ENCODE measurements at regions of chr11 and their contacts with region 1.

Region 1: DNA sequence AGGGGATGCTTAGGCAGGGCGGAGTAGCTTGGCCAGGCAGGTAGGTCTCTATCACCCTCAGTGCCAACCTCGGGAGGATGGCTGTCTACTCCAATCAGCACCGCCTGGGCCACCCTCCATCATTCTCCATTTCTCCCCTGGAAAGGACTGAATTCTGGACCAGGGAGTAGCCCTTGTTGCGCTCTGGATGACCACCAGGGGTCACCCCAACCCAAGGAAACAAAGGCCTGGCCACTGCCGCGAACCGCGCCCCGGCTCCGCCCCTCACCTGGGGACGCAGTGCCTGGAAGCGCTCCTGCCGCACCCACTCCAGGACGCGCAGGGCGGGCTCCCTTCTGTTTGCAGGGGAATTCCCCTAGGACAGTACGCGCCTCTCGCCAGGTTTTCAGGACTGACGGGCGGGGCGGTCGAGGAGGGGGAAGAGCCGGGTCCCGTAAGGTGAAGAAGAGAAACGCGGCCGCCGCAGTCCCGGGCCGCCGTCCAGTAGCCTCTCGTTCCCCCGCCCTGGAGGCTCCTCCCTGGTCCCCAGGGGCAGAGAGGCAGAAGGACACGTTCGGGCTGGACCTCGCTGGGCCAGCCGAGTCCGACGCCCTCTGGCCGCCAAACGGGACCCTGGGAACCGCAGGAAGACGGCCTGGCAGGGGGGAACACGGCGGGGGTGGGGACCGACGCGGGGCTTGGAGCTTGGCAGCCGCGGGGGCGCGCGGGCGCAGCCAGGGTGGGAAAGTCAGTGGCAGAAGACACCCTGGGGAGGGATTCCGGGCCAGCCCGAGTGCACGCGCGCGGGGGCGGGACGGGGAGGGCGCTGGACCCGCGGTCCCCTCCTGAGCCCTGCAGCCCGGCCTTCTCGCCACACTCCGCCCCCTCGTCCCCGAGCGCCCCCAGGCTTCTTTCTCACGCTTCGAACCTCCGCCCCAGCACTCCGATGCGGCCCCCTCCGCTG is 7.1 kb downstream of the SCN4B start:
- DNase-seq: peak; percentile 73 to 91 (median 88)
- ATAC-seq: peak; percentile 97
- H3K4me3 ChIP-seq: peak overlapping the region; percentile 57 to 63
- H3K4me3 Mint-ChIP-seq: peak overlapping the region; percentile 86
- H3K27ac ChIP-seq: no peak overlapping the region
- H3K27ac Mint-ChIP-seq: no peak overlapping the region
- H3K4me1 ChIP-seq: peaks cover 3% of the 10 kb centered on the region
- H3K4me1 Mint-ChIP-seq: peaks cover 3% of the 10 kb centered on the region
- H3K27me3 ChIP-seq: peaks cover 11% of the 10 kb centered on the region in 2 experiments
- H3K27me3 Mint-ChIP-seq: peaks cover 35% of the 10 kb centered on the region
- CTCF ChIP-seq: peak; percentile 67

Region 2: GRCh38 chr11:117759305-117759704 is 386.3 kb before region 1 on chr11:
- CTCF ChIA-PET with region 1: no interaction called
- POLR2A ChIA-PET with region 1: no interaction called
- intact Hi-C with region 1: no loop called
- DNase-seq: no peak
- ATAC-seq: no peak
- H3K4me3 ChIP-seq: no peak overlapping the region
- H3K4me3 Mint-ChIP-seq: no peak overlapping the region
- H3K27ac ChIP-seq: no peak overlapping the region
- H3K27ac Mint-ChIP-seq: no peak overlapping the region
- H3K4me1 ChIP-seq: no peaks in the 10 kb centered on the region
- H3K4me1 Mint-ChIP-seq: no peaks in the 10 kb centered on the region
- H3K27me3 ChIP-seq: no peaks in the 10 kb centered on the region
- H3K27me3 Mint-ChIP-seq: no peaks in the 10 kb centered on the region
- CTCF ChIP-seq: no peak

Region 3: DNA sequence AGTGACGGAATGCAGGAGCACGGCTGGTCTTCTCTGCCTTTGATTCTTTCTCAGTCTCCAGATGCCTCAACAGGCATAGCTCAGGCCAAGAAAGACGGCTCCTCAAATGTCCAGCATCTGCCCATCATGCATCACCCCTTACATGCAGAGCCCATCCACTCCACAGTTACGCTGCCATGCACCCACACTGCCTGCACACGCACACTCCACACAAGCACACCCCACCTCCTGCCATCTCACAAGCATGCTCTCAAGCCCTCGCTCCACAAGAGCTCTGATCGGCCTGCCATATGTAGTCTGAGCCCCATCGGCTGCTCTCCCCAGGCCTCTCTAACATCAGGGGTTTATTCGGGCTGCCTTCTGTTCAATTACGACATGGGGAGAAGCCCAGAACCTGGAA is 11.7 kb before region 1 on chr11:
- CTCF ChIA-PET with region 1: interaction called, 12 read pairs
- POLR2A ChIA-PET with region 1: no interaction called
- intact Hi-C with region 1: no loop called
- DNase-seq: no peak
- ATAC-seq: no peak
- H3K4me3 ChIP-seq: no peak overlapping the region
- H3K4me3 Mint-ChIP-seq: no peak overlapping the region
- H3K27ac ChIP-seq: no peak overlapping the region
- H3K27ac Mint-ChIP-seq: no peak overlapping the region
- H3K4me1 ChIP-seq: no peaks in the 10 kb centered on the region
- H3K4me1 Mint-ChIP-seq: no peaks in the 10 kb centered on the region
- H3K27me3 ChIP-seq: no peaks in the 10 kb centered on the region
- H3K27me3 Mint-ChIP-seq: peaks cover 12% of the 10 kb centered on the region
- CTCF ChIP-seq: no peak

Region 4: GRCh38 chr11:118290923-118291322 is 145.4 kb after region 1 on chr11:
- CTCF ChIA-PET with region 1: interaction called, 16 read pairs
- POLR2A ChIA-PET with region 1: no interaction called
- intact Hi-C with region 1: loop called (anchors 1 to 2 kb)
- DNase-seq: peak in 7 of 9 experiments; percentile 16 to 74 (median 37)
- ATAC-seq: peak; percentile 43
- H3K4me3 ChIP-seq: no peak overlapping the region
- H3K4me3 Mint-ChIP-seq: no peak overlapping the region
- H3K27ac ChIP-seq: no peak overlapping the region
- H3K27ac Mint-ChIP-seq: no peak overlapping the region
- H3K4me1 ChIP-seq: peaks cover 7% of the 10 kb centered on the region
- H3K4me1 Mint-ChIP-seq: peaks cover 12% of the 10 kb centered on the region
- H3K27me3 ChIP-seq: no peaks in the 10 kb centered on the region
- H3K27me3 Mint-ChIP-seq: no peaks in the 10 kb centered on the region
- CTCF ChIP-seq: peak; percentile 42

Region 5: DNA sequence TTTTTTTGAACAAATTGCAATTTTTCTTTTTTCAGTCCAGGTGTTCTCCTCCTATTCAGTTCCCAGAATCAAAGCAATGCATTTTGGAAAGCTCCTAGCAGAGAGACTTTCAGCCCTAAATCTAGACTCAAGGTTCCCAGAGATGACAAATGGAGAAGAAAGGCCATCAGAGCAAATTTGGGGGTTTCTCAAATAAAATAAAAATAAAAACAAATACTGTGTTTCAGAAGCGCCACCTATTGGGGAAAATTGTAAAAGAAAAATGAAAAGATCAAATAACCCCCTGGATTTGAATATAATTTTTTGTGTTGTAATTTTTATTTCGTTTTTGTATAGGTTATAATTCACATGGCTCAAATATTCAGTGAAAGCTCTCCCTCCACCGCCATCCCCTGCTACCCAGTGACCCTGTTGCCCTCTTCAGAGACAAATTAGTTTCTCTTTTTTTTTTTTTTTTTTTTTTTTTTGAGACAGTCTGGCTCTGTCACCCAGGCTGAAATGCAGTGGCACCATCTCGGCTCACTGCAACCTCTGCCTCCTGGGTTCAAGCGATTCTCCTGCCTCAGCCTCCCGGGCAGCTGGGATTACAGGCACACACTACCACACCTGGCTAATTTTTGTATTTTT is 207.6 kb after region 1 on chr11:
- CTCF ChIA-PET with region 1: no interaction called
- POLR2A ChIA-PET with region 1: no interaction called
- intact Hi-C with region 1: loop called (anchors 1 to 2 kb)
- DNase-seq: peak in 2 of 9 experiments; percentile 68 to 79
- ATAC-seq: peak; percentile 35
- H3K4me3 ChIP-seq: no peak overlapping the region
- H3K4me3 Mint-ChIP-seq: peak overlapping the region; percentile 43
- H3K27ac ChIP-seq: peak overlapping the region; percentile 13 to 56
- H3K27ac Mint-ChIP-seq: peak overlapping the region; percentile 92
- H3K4me1 ChIP-seq: peaks cover 29% of the 10 kb centered on the region
- H3K4me1 Mint-ChIP-seq: peaks cover 42% of the 10 kb centered on the region
- H3K27me3 ChIP-seq: no peaks in the 10 kb centered on the region
- H3K27me3 Mint-ChIP-seq: no peaks in the 10 kb centered on the region
- CTCF ChIP-seq: peak; percentile 82

Region 6: GRCh38 chr11:118488480-118489109 is 343.0 kb after region 1 on chr11:
- CTCF ChIA-PET with region 1: interaction called, 14 read pairs
- POLR2A ChIA-PET with region 1: no interaction called
- intact Hi-C with region 1: loop called (anchors 1 kb)
- DNase-seq: peak; percentile 66 to 88 (median 81)
- ATAC-seq: peak; percentile 77
- H3K4me3 ChIP-seq: no peak overlapping the region
- H3K4me3 Mint-ChIP-seq: no peak overlapping the region
- H3K27ac ChIP-seq: no peak overlapping the region
- H3K27ac Mint-ChIP-seq: no peak overlapping the region
- H3K4me1 ChIP-seq: no peaks in the 10 kb centered on the region
- H3K4me1 Mint-ChIP-seq: peaks cover 4% of the 10 kb centered on the region
- H3K27me3 ChIP-seq: no peaks in the 10 kb centered on the region
- H3K27me3 Mint-ChIP-seq: no peaks in the 10 kb centered on the region
- CTCF ChIP-seq: peak; percentile 93

Region 7: GRCh38 chr11:118610804-118611795 is 465.5 kb after region 1 on chr11:
- CTCF ChIA-PET with region 1: interaction called, 4 read pairs
- POLR2A ChIA-PET with region 1: no interaction called
- intact Hi-C with region 1: loop called (anchors 1 kb)
- DNase-seq: peak; percentile 64 to 91 (median 85)
- ATAC-seq: peak; percentile 34
- H3K4me3 ChIP-seq: peak overlapping the region; percentile 40 to 61
- H3K4me3 Mint-ChIP-seq: peak overlapping the region; percentile 78
- H3K27ac ChIP-seq: no peak overlapping the region
- H3K27ac Mint-ChIP-seq: no peak overlapping the region
- H3K4me1 ChIP-seq: peaks cover 28% of the 10 kb centered on the region
- H3K4me1 Mint-ChIP-seq: peaks cover 25% of the 10 kb centered on the region
- H3K27me3 ChIP-seq: peaks cover 0 to 13% of the 10 kb centered on the region in 2 experiments
- H3K27me3 Mint-ChIP-seq: no peaks in the 10 kb centered on the region
- CTCF ChIP-seq: peak; percentile 85

Measured in CD8-positive, alpha-beta T cell (primary cell).